Heart left ventricle (tissue), 16 donors: ENCODE measurements at regions of chr3 and their contacts with region 1.

Region 1: DNA sequence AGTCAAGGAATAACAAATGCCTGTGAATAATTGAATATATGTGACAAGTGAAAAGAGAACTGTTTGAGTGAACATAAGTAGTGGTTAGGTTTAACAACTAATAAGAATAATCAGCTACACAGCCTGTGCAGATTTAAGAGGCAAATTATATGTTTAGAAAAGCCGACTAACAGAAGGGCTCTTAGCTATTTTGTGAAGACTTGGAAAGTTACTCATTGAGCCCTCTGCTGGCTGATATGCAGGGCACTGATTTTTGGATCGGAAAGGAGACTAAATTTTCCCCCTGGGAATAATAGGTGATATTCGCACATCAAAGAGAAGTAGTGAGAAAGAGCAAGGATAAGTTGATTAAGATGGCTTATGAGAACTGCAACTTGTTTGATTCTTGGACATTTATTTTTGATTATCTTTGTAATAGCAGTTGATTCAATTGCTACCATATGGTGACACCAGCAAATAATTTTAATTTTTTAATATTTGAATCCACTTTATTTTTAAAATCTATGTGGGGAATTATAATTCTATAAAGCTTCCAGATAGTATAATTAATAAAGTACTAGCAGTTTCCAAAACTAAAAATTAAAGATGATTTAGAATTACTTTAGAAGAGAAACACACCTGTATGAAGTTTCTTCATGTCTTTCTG is 156.2 kb downstream of the NLGN1 start:
- DNase-seq: no peak
- ATAC-seq: peak in 1 of 4 donors; percentile 70
- H3K4me3 ChIP-seq: no peak overlapping the region
- H3K27ac ChIP-seq: no peak overlapping the region
- H3K4me1 ChIP-seq: peaks cover 0 to 4% (median 0%) of the 10 kb centered on the region in 12 donors
- H3K27me3 ChIP-seq: no peaks in the 10 kb centered on the region
- CTCF ChIP-seq: peak; percentile 43 to 80 (median 70)
- POLR2A ChIP-seq: no peak

Region 2: DNA sequence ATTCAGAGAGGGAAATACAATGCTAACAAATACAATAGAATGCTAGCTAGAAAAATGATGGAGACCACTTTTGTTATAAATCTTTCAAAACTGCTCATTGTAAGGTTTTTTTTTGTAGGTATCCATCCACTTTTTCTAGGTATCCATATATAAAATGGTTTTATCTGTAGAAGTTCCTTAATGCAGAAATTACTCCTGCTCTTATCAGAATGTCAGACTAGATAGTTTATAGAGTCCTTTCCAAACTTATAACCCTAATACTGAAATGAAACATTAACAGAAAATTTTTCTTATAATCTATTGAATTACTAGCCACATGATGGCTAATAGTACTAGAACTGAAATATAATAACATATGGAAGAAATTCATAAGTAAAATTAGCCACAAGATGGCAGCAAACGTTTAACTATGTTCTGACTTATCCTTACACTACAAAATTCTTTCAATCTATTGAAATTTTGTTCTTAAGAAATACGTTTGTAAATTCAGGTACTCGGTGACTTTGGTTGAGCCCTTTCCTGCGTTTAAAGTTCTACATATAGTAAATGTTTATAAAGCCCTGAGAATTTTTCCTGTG is 744.7 kb before region 1 on chr3:
- intact Hi-C with region 1: loop called in 5 of 10 experiments (anchors 5 to 10 kb)
- DNase-seq: no peak
- ATAC-seq: no peak
- H3K4me3 ChIP-seq: no peak overlapping the region
- H3K27ac ChIP-seq: no peak overlapping the region
- H3K4me1 ChIP-seq: no peaks in the 10 kb centered on the region
- H3K27me3 ChIP-seq: no peaks in the 10 kb centered on the region
- CTCF ChIP-seq: peak in 11 of 12 donors; percentile 24 to 63 (median 48)
- POLR2A ChIP-seq: no peak

Region 3: DNA sequence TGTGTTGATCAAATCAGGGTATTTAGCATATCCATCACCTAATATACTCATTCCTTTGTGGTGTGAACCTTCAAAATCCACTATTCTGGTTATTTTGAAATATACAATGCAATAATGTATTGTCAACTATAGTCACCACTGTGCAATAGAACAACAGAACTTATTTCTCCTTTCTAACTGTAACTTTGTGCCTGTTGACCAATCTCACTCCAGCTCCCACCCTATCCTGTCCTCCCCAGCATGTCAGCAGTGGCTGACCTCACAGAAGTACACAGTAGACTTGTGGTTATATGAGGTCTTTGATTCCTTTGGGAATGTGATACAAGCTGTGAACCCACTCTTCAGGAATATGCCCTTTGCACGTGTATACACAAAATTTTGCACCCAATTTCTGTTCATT is 739.0 kb before region 1 on chr3:
- intact Hi-C with region 1: loop called in 5 of 10 experiments (anchors 5 to 10 kb)
- DNase-seq: no peak
- ATAC-seq: no peak
- H3K4me3 ChIP-seq: no peak overlapping the region
- H3K27ac ChIP-seq: peak overlapping the region in 5 of 12 donors; percentile 55 to 73 (median 69)
- H3K4me1 ChIP-seq: peaks cover 0 to 13% (median 0%) of the 10 kb centered on the region in 12 donors
- H3K27me3 ChIP-seq: no peaks in the 10 kb centered on the region
- CTCF ChIP-seq: no peak
- POLR2A ChIP-seq: no peak

Region 4: GRCh38 chr3:172982736-172983364 is 570.9 kb before region 1 on chr3:
- intact Hi-C with region 1: loop called in 5 of 10 experiments (anchors 5 to 10 kb)
- DNase-seq: no peak
- ATAC-seq: peak; percentile 42 to 70 (median 60)
- H3K4me3 ChIP-seq: peak overlapping the region in 4 of 12 donors; percentile 11 to 28 (median 20)
- H3K27ac ChIP-seq: peak overlapping the region in 2 of 12 donors; percentile 13 to 65
- H3K4me1 ChIP-seq: peaks cover 0 to 9% (median 0%) of the 10 kb centered on the region in 12 donors
- H3K27me3 ChIP-seq: no peaks in the 10 kb centered on the region
- CTCF ChIP-seq: peak in 10 of 12 donors; percentile 14 to 47 (median 30)
- POLR2A ChIP-seq: no peak

Region 5: DNA sequence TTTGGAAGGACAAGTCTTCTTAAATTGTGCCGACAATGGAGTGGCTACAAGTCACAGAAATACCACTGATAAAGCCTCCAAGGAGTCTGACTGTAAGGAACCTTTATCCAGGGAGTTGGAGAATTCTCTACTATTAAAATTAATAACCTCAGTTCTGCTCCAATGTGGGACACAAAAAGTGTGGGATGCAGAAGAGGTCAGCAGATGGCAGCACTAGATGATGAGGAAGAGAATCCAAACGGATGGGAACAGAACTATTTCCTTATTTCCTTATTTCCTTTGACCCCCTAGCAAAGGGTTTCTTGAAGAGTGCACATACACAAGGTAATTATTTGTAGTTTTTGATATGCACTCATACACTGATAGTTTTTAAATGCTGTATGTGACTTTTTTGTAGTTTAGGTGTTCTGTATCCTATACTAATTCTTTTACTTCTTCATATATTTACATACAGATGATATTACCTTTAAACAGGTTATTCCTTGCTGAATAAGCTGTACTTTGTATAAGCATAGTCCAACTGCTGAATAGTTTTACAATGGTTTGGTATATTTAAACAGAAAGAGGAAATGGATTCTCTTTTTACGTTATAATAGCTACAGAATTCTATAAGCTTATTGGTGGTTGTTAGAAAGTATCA is 181.8 kb before region 1 on chr3:
- intact Hi-C with region 1: loop called in 4 of 10 experiments (anchors 2 to 5 kb)
- DNase-seq: peak in 2 of 5 donors; percentile 24 to 41
- ATAC-seq: peak in 2 of 4 donors; percentile 33 to 58
- H3K4me3 ChIP-seq: no peak overlapping the region
- H3K27ac ChIP-seq: no peak overlapping the region
- H3K4me1 ChIP-seq: no peaks in the 10 kb centered on the region
- H3K27me3 ChIP-seq: no peaks in the 10 kb centered on the region
- CTCF ChIP-seq: peak; percentile 43 to 73 (median 56)
- POLR2A ChIP-seq: no peak

Region 6: GRCh38 chr3:173411375-173411973 is 142.3 kb before region 1 on chr3:
- intact Hi-C with region 1: loop called in 9 of 10 experiments (anchors 1 to 5 kb)
- DNase-seq: peak in 1 of 5 donors; percentile 20
- ATAC-seq: peak; percentile 49 to 85 (median 63)
- H3K4me3 ChIP-seq: peak overlapping the region in 8 of 12 donors; percentile 6 to 43 (median 32)
- H3K27ac ChIP-seq: peak overlapping the region in 4 of 12 donors; percentile 2 to 44 (median 18)
- H3K4me1 ChIP-seq: peaks cover 0 to 15% (median 7%) of the 10 kb centered on the region in 12 donors
- H3K27me3 ChIP-seq: no peaks in the 10 kb centered on the region
- CTCF ChIP-seq: peak; percentile 20 to 60 (median 50)
- POLR2A ChIP-seq: no peak

Region 7: DNA sequence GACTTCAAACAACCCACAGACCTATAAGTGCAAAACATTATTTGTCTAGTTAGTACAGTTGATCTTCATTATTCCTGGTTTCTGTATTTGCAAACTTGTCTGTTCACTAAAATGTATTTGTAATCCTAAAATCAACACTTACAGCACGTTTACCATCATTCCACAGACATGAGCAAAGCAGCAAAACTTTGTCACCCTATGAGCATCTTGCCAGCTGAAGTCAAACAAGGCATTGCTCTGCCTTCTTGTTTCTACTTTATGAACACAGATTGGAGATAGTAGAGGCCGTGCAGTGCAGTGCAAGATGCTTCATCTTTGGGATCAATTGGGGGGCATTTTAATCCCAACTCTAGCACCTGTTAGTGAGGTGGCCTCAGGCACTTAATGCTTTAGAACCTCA is 45.9 kb after region 1 on chr3:
- intact Hi-C with region 1: no loop called
- DNase-seq: no peak
- ATAC-seq: no peak
- H3K4me3 ChIP-seq: no peak overlapping the region
- H3K27ac ChIP-seq: no peak overlapping the region
- H3K4me1 ChIP-seq: no peaks in the 10 kb centered on the region
- H3K27me3 ChIP-seq: no peaks in the 10 kb centered on the region
- CTCF ChIP-seq: no peak
- POLR2A ChIP-seq: no peak